ENCODE measurements at regions of chr17 and their contacts with region 1.

Region 1: GRCh38 chr17:31216053-31216751 is 80.8 kb downstream of the OMG start:
- DNase-seq: no peak
- ATAC-seq: peak in 2 of 4 donors; percentile 32 to 38
- H3K4me3 ChIP-seq: no peak overlapping the region
- H3K27ac ChIP-seq: no peak overlapping the region
- H3K4me1 ChIP-seq: no peaks in the 10 kb centered on the region
- H3K27me3 ChIP-seq: no peaks in the 10 kb centered on the region
- CTCF ChIP-seq: peak; percentile 65 to 69 (median 67)
- POLR2A ChIP-seq: no peak

Region 2: GRCh38 chr17:31015639-31016038 is 200.6 kb before region 1 on chr17:
- intact Hi-C with region 1: loop called (anchors 10 kb)
- DNase-seq: no peak
- ATAC-seq: no peak
- H3K4me3 ChIP-seq: no peak overlapping the region
- H3K27ac ChIP-seq: no peak overlapping the region
- H3K4me1 ChIP-seq: no peaks in the 10 kb centered on the region
- H3K27me3 ChIP-seq: no peaks in the 10 kb centered on the region
- CTCF ChIP-seq: no peak
- POLR2A ChIP-seq: no peak

Measured in right lobe of liver (tissue), 6 donors.